ENCODE measurements at regions of chr10 and their contacts with region 1.

Region 1: DNA sequence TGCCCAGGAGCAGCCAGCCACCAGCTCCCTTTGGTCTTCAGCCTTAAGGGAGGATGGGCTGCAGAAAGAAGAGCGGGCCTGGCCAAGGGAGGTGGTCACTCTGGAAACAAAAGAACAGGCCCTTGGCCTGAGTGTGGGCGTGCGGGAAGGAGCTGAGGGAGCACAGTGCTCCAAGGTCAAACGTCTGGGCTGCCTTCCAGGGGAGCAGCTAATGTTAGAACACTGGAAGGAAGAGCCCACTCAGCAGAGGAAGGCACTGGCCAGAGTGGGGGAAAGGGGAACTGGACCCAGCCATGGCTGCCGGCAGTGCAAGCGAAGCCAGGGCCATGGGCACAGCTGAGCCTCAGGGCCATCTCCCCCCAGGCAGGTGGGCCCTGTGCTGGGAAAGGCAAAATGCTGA is 42.7 kb downstream of the FAM53B start:
- DNase-seq: no peak
- H3K27ac ChIP-seq: peak overlapping the region; percentile 21
- CTCF ChIP-seq: no peak

Region 2: GRCh38 chr10:124802313-124802675 is 100.9 kb after region 1 on chr10:
- CTCF ChIA-PET with region 1: no interaction called
- POLR2A ChIA-PET with region 1: interaction called, 11 read pairs
- DNase-seq: no peak
- H3K27ac ChIP-seq: peak overlapping the region; percentile 67
- CTCF ChIP-seq: no peak

Region 3: GRCh38 chr10:124928087-124928486 is 226.7 kb after region 1 on chr10:
- CTCF ChIA-PET with region 1: no interaction called
- POLR2A ChIA-PET with region 1: no interaction called
- DNase-seq: no peak
- H3K27ac ChIP-seq: no peak overlapping the region
- CTCF ChIP-seq: no peak

Region 4: GRCh38 chr10:125083576-125083920 is 382.1 kb after region 1 on chr10:
- CTCF ChIA-PET with region 1: no interaction called
- POLR2A ChIA-PET with region 1: no interaction called
- DNase-seq: no peak
- H3K27ac ChIP-seq: peak overlapping the region; percentile 76
- CTCF ChIP-seq: no peak

Measured in RWPE1 (cell line).